PC-9 (cell line): ENCODE measurements at regions of chr1 and their contacts with region 1.

Region 1: DNA sequence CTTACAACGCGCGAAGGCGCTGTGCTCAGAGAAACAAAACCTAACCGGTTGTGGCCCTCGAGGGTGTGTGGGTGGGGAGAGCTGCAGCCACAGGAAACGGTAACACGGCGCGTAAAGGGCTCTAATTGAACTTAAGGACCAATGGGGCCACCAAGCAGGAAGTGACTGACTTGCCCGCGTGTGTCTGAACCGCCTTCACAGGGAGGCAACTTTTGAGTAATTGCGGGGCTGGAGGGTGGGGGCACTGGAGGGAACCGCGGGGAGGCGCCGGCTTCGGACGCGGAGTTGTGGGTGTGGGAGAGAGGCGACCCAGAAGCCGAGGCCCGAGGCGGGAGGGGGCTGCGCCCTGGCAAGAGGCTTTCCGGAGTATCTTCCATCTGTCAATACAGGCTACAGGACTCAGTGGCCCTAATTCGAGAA is 577 bp upstream of the PNRC2 start:
- DNase-seq: peak; percentile 75 to 80
- H3K4me3 ChIP-seq: peak overlapping the region; percentile 97
- H3K27ac ChIP-seq: peak overlapping the region; percentile 91
- H3K4me1 ChIP-seq: peaks cover 48% of the 10 kb centered on the region
- H3K27me3 ChIP-seq: no peaks in the 10 kb centered on the region
- CTCF ChIP-seq: no peak

Region 2: GRCh38 chr1:22889213-22889827 is 1069.7 kb before region 1 on chr1:
- CTCF ChIA-PET with region 1: no interaction called
- POLR2A ChIA-PET with region 1: interaction called, 15 read pairs
- intact Hi-C with region 1: no loop called
- DNase-seq: peak in 1 of 2 experiments; percentile 12
- H3K4me3 ChIP-seq: no peak overlapping the region
- H3K27ac ChIP-seq: no peak overlapping the region
- H3K4me1 ChIP-seq: no peaks in the 10 kb centered on the region
- H3K27me3 ChIP-seq: no peaks in the 10 kb centered on the region
- CTCF ChIP-seq: peak; percentile 85

Region 3: DNA sequence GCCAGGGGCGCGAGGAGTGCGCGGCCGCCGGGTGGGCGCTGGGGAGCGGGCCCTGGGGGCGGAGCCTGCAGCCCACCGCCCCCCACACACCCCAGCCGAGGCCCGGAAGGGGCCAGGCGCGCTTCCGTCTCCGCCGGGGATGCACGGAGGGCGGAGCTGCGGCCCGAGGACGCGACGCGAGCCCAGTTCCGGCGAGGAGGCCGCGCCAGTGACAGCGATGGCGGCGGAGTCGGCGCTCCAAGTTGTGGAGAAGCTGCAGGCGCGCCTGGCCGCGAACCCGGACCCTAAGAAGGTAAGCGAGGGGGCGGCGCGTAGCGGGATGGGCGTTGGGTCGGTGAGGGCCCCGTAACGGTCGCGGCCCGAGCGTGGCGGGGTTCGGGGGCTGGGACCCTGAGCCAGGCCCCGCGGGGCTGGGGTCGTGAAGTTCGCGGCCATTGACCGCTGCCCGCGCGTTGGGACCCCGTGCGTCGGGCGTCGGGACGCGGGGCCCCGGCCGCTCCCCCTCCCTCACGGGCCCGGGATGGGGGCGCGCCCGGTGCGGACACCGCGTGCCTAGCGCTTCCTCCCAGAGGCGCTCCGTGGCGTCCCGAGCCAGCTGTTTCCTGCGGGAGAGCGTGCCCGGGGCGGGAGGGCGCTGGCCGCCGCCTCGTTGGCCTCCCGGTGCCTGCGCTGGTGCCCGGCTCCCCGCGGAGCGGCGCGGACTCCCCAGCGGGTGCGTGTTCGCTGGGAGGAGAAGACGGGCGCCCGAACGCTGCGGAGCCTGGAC is 215.6 kb before region 1 on chr1 and contains the start of gene ELOA:
- CTCF ChIA-PET with region 1: no interaction called
- POLR2A ChIA-PET with region 1: interaction called, 19 read pairs
- intact Hi-C with region 1: no loop called
- DNase-seq: peak in 1 of 2 experiments; percentile 56
- H3K4me3 ChIP-seq: peak within 1 kb of the TSS; percentile 66
- H3K27ac ChIP-seq: peak within 1 kb of the TSS; percentile 29; the same call in 1 of the 2 replicates
- H3K4me1 ChIP-seq: peaks cover 11% of the 10 kb centered on the region
- H3K27me3 ChIP-seq: no peaks in the 10 kb centered on the region
- CTCF ChIP-seq: no peak
- total RNA-seq, gene ELOA: 26.2 and 26.4 TPM in 2 replicates

Region 4: GRCh38 chr1:23867953-23868556 is 91.0 kb before region 1 on chr1 and contains the start of gene FUCA1:
- CTCF ChIA-PET with region 1: no interaction called
- POLR2A ChIA-PET with region 1: interaction called, 6 read pairs
- intact Hi-C with region 1: loop called (anchors 5 kb)
- DNase-seq: peak; percentile 75 to 93
- H3K4me3 ChIP-seq: peak within 1 kb of the TSS; percentile 64
- H3K27ac ChIP-seq: no peak within 1 kb of the TSS
- H3K4me1 ChIP-seq: peaks cover 21% of the 10 kb centered on the region
- H3K27me3 ChIP-seq: no peaks in the 10 kb centered on the region
- CTCF ChIP-seq: peak; percentile 78
- total RNA-seq, gene FUCA1: 29.0 and 30.9 TPM in 2 replicates

Region 5: DNA sequence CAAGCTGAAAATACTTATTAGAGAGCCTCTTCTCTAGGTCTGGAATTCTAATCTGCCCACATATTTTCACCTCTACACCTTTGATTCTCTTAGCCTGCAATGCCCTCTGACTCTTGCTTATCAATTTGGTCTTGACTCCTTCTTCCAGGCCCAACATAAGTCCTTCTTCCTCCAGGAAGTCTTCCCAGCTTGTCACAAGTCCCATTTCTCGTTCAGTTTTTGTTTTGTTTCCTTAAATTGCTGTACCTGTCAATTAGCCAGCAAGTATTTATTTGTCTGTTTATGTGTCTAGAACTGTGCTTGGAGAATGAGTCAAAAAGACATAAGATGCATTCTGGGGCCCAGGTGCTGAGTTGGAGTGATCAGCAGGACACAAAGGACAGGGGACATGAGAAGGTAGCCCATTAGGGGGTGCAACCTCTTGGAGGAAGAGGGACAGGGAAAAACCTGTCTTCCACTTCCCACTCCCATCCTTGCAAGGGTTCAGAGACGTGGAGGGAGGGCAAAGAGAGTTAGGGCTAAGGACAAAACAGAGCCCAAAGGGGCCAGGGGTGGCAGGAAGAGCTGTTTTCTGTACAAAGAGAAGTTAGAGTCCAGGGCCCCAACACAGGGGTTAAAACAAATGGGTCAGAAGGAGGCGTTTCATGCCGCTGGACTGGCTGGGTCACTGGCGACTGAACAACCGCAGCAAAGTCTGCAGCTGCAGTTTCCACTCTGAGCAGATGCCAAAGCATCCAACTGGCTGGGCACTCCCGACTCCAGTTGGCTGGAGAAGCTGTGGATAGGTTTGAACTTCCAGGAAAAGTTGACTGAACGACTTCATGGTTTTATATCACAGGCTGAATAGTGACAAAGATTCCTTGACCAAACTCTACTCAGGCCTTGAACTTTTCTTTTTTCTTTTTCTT is 35.2 kb before region 1 on chr1:
- CTCF ChIA-PET with region 1: no interaction called
- POLR2A ChIA-PET with region 1: no interaction called
- intact Hi-C with region 1: loop called (anchors 5 kb)
- DNase-seq: no peak
- H3K4me3 ChIP-seq: no peak overlapping the region
- H3K27ac ChIP-seq: no peak overlapping the region
- H3K4me1 ChIP-seq: no peaks in the 10 kb centered on the region; the same call in 1 of the 2 replicates
- H3K27me3 ChIP-seq: no peaks in the 10 kb centered on the region
- CTCF ChIP-seq: no peak

Region 6: GRCh38 chr1:24018611-24019580 is 59.8 kb after region 1 on chr1:
- CTCF ChIA-PET with region 1: no interaction called
- POLR2A ChIA-PET with region 1: interaction called, 3 read pairs
- intact Hi-C with region 1: loop called (anchors 2 kb)
- DNase-seq: peak; percentile 93 to 95
- H3K4me3 ChIP-seq: peak overlapping the region; percentile 26; the same call in 1 of the 2 replicates
- H3K27ac ChIP-seq: peak overlapping the region; percentile 95
- H3K4me1 ChIP-seq: peaks cover 55% of the 10 kb centered on the region
- H3K27me3 ChIP-seq: no peaks in the 10 kb centered on the region
- CTCF ChIP-seq: no peak

Region 7: DNA sequence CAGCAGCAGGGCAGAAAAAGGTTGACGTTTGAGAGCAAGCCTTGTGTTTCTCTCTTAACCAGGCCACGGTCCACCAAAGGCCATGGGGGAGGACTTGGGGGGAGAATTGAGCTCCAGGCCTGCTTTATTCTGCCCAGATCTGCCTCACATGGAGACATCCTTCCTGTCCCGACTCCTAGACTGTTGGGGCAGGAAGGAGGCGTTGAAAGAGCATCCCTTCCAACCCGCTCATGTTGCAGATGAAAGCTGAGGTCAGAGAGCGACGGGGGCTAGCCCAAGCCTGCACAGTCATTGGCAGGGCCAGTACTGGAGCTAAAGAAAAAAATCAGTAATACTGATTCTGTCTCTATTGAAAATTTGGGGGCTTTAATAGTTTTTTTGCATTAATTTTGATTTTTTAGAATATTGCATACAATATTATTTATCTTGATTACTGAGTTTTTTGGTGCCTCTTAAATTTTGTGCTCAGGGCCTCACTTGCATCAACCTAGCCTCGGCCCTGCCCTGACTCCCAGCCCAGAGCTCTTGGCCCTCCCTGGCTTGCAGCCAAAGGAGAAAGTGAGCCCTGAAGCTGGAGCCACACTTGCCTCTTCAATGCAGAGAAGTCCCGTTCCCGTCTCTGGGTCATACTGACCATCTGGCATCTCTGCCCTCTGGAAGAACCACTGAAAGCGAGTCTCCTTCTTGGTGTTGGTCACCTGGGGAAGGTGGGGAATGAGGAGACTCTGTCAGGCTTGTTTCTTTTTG is 106.4 kb after region 1 on chr1:
- CTCF ChIA-PET with region 1: no interaction called
- POLR2A ChIA-PET with region 1: no interaction called
- intact Hi-C with region 1: no loop called
- DNase-seq: no peak
- H3K4me3 ChIP-seq: no peak overlapping the region
- H3K27ac ChIP-seq: no peak overlapping the region
- H3K4me1 ChIP-seq: no peaks in the 10 kb centered on the region
- H3K27me3 ChIP-seq: no peaks in the 10 kb centered on the region
- CTCF ChIP-seq: no peak

Region 8: DNA sequence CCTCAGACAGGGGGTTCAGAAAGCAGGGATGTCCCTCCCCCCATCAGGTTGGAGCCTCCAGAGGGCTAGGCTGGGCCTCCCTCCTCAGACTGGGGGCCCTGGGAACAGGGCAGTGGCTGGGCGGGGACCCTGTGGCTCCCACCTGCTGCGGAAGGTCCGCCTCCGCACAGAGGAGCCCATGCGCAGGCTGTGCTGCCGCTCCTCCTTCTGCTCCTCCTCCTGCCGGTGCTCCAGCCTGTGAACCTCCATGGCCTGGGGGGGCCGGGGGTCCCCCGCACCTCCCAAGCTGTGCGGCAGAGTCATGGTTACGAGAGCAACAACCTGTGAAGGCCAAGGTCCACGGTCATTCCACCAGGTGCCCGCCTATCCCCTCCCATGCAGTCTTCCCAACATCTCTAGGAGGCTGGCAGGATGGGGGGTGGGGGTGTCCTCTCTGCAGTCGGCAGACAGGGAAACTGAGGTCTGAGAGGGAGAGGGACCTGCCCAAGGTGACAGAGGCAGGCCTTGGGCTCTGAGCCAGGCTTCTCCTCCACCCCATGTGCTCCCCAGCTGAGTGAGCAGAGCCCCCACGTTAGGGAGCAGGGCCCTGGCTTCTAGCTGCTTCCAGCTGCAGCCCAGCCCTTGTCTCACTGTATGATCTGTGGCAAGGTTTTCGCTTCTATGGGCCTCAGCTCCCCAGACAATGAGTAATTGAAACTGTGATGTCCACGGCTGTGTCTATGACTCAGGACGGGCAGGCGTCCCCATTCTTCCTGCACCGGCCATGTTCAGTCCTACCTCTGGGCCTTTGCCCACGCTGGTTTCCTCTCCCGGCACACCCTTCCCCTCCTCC is 149.5 kb after region 1 on chr1:
- CTCF ChIA-PET with region 1: no interaction called
- POLR2A ChIA-PET with region 1: no interaction called
- intact Hi-C with region 1: loop called (anchors 5 kb)
- DNase-seq: peak; percentile 60 to 65
- H3K4me3 ChIP-seq: no peak overlapping the region
- H3K27ac ChIP-seq: no peak overlapping the region
- H3K4me1 ChIP-seq: peaks cover 4% of the 10 kb centered on the region; the same call in 1 of the 2 replicates
- H3K27me3 ChIP-seq: no peaks in the 10 kb centered on the region
- CTCF ChIP-seq: no peak